Activated CD8-positive, alpha-beta T cell treated with anti-CD3 and anti-CD28 coated beads for 36 hours (primary cell): ENCODE measurements at regions of chr12 and their contacts with region 1.

Region 1: GRCh38 chr12:89138048-89138852 is 214.1 kb downstream of the DUSP6 start:
- DNase-seq: peak; percentile 54
- ATAC-seq: peak; percentile 91
- H3K4me3 Mint-ChIP-seq: no peak overlapping the region
- H3K27ac Mint-ChIP-seq: peak overlapping the region; percentile 75
- H3K4me1 Mint-ChIP-seq: peaks cover 30% of the 10 kb centered on the region
- H3K27me3 Mint-ChIP-seq: no peaks in the 10 kb centered on the region
- CTCF ChIP-seq: no peak

Region 2: DNA sequence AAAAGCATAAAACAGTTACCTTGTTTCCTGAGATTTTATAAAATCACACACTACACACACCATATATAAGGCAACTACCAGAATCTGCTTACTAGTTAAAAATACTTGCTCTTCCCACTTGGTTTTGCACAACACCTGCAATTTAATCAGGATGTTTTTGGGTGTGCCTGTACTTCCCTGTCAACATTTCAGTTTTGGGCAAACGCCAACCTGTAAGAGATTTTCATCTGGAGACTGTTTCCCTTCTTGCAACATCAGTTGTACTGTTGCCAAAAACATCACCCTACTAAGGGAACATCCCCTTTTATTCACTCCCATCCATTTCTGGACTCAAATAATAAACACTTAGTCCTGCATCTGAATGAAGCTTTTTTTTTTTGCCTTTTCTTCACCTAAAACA is 41.7 kb after region 1 on chr12:
- CTCF ChIA-PET with region 1: no interaction called
- POLR2A ChIA-PET with region 1: no interaction called
- intact Hi-C with region 1: loop called (anchors 2 kb)
- DNase-seq: no peak
- ATAC-seq: no peak
- H3K4me3 Mint-ChIP-seq: no peak overlapping the region
- H3K27ac Mint-ChIP-seq: no peak overlapping the region
- H3K4me1 Mint-ChIP-seq: peaks cover 28% of the 10 kb centered on the region
- H3K27me3 Mint-ChIP-seq: peaks cover 6% of the 10 kb centered on the region
- CTCF ChIP-seq: no peak